B cell (primary cell): ENCODE measurements at regions of chr1 and their contacts with region 1.

Region 1: GRCh38 chr1:168178638-168179437 is at the start of gene TIPRL:
- DNase-seq: peak; percentile 96
- ATAC-seq: peak; percentile 92
- H3K4me3 ChIP-seq: peak within 1 kb of the TSS; percentile 87 to 97 (median 91)
- H3K4me3 Mint-ChIP-seq: peak within 1 kb of the TSS; percentile 47
- H3K27ac ChIP-seq: peak within 1 kb of the TSS; percentile 83 to 98
- H3K27ac Mint-ChIP-seq: peak within 1 kb of the TSS; percentile 15
- H3K4me1 ChIP-seq: peaks cover 17 to 18% of the 10 kb centered on the region in 2 donors
- H3K4me1 Mint-ChIP-seq: peaks cover 1% of the 10 kb centered on the region
- H3K27me3 ChIP-seq: peaks cover 0 to 5% (median 0%) of the 10 kb centered on the region in 4 experiments
- H3K27me3 Mint-ChIP-seq: peaks cover 4% of the 10 kb centered on the region
- CTCF ChIP-seq: peak; percentile 73
- total RNA-seq, gene TIPRL: 22.7 and 24.9 TPM in 2 replicates

Region 2: GRCh38 chr1:168136709-168137514 is 41.9 kb before region 1 on chr1 and contains the start of gene GPR161:
- CTCF ChIA-PET with region 1: no interaction called
- POLR2A ChIA-PET with region 1: no interaction called
- intact Hi-C with region 1: loop called (anchors 2 kb)
- DNase-seq: peak; percentile 54
- ATAC-seq: peak; percentile 55
- H3K4me3 ChIP-seq: peak within 1 kb of the TSS in 4 of 5 experiments; percentile 51 to 74 (median 62)
- H3K4me3 Mint-ChIP-seq: peak within 1 kb of the TSS; percentile 95
- H3K27ac ChIP-seq: peak within 1 kb of the TSS in 1 of 2 donors; percentile 15
- H3K27ac Mint-ChIP-seq: peak within 1 kb of the TSS; percentile 41
- H3K4me1 ChIP-seq: peaks cover 13 to 17% of the 10 kb centered on the region in 2 donors
- H3K4me1 Mint-ChIP-seq: peaks cover 20% of the 10 kb centered on the region
- H3K27me3 ChIP-seq: peaks cover 2 to 36% (median 26%) of the 10 kb centered on the region in 4 experiments
- H3K27me3 Mint-ChIP-seq: peaks cover 36% of the 10 kb centered on the region
- CTCF ChIP-seq: no peak
- total RNA-seq, gene GPR161: 0.17 and 0.22 TPM in 2 replicates

Region 3: DNA sequence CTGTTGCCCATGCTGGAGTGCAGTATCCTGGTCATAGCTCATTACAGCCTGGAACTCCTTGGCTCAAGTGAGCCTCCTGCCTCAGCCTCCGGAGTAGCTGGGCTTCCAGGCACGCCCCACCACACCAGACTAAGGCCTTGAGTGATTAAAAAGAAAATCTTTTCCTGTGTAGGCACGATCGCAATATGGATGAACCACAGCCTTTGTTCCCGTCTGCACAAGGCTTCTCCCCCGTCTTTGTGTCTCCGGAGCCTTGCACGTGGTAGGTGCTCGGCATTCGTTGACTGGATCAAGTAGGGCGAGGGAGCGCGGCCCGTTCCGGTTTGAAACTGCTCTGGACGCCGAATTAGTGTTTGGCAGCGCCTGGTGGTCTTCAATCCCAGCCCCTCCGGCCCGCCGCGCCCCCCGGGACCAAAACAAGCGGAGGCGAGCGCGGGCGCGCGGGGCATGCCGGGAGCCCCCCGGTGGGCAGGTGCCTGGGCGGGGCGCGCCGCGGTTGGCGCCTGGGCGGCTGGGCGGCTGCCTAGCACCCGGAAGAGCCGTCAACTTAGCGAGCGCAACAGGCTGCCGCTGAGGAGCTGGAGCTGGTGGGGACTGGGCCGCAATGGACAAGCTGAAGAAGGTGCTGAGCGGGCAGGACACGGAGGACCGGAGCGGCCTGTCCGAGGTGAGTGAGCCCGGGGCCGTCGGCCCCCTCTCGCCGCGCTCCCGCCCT is 46.8 kb after region 1 on chr1 and contains the start of gene SFT2D2:
- CTCF ChIA-PET with region 1: interaction called, 4 read pairs
- POLR2A ChIA-PET with region 1: interaction called, 9 read pairs
- intact Hi-C with region 1: loop called (anchors 1 kb)
- DNase-seq: peak; percentile 87
- ATAC-seq: peak; percentile 93
- H3K4me3 ChIP-seq: peak within 1 kb of the TSS; percentile 71 to 89 (median 84)
- H3K4me3 Mint-ChIP-seq: peak within 1 kb of the TSS; percentile 89
- H3K27ac ChIP-seq: peak within 1 kb of the TSS; percentile 73 to 91
- H3K27ac Mint-ChIP-seq: peak within 1 kb of the TSS; percentile 98
- H3K4me1 ChIP-seq: peaks cover 42 to 45% of the 10 kb centered on the region in 2 donors
- H3K4me1 Mint-ChIP-seq: peaks cover 49% of the 10 kb centered on the region
- H3K27me3 ChIP-seq: no peaks in the 10 kb centered on the region
- H3K27me3 Mint-ChIP-seq: peaks cover 2% of the 10 kb centered on the region
- CTCF ChIP-seq: no peak
- total RNA-seq, gene SFT2D2: 68.3 and 79.0 TPM in 2 replicates

Region 4: DNA sequence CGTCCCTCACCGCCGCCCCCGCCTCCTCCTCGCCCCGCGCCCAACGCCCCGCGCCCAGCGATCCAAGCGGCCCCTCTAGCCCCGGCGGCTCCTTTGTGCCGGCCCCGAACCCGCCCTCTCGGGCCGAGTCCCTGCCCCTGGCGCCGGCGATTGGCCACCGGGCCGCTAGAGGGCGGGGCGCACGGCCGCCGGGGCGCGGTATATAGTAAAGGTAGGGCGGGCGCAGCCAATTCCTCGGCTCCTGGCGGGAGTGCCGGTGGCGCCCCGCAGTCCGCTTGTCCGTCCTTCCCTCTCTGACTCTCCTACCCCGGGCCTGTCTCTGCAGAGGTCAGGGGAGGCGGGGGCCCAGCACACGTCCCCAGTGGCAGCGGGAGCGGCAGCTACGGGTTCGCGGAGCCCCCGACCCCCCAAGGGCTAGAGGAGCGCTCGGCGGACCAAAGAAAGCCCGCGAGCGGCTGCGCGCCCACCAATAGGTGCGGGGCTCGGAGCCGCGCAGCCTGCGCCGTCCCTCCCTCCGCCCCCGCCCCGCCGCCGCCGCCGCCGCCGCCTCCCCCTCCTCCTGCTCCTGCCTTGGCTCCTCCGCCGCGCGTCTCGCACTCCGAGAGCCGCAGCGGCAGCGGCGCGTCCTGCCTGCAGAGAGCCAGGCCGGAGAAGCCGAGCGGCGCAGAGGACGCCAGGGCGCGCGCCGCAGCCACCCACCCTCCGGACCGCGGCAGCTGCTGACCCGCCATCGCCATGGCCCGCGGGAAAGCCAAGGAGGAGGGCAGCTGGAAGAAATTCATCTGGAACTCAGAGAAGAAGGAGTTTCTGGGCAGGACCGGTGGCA is 927.5 kb after region 1 on chr1 and contains the start of gene ATP1B1:
- CTCF ChIA-PET with region 1: no interaction called
- POLR2A ChIA-PET with region 1: no interaction called
- intact Hi-C with region 1: loop called (anchors 2 kb)
- DNase-seq: peak; percentile 81
- ATAC-seq: peak; percentile 95
- H3K4me3 ChIP-seq: peak within 1 kb of the TSS; percentile 17 to 78 (median 63)
- H3K4me3 Mint-ChIP-seq: no peak within 1 kb of the TSS
- H3K27ac ChIP-seq: no peak within 1 kb of the TSS
- H3K27ac Mint-ChIP-seq: peak within 1 kb of the TSS; percentile 63
- H3K4me1 ChIP-seq: peaks cover 17 to 18% of the 10 kb centered on the region in 2 donors
- H3K4me1 Mint-ChIP-seq: peaks cover 16% of the 10 kb centered on the region
- H3K27me3 ChIP-seq: peaks cover 0 to 45% (median 24%) of the 10 kb centered on the region in 4 experiments
- H3K27me3 Mint-ChIP-seq: peaks cover 37% of the 10 kb centered on the region
- CTCF ChIP-seq: peak; percentile 58
- total RNA-seq, gene ATP1B1: 1.7 and 3.1 TPM in 2 replicates